A673 (cell line): ENCODE measurements at regions of chr5 and their contacts with region 1.

Region 1: GRCh38 chr5:178291161-178291561 is 58.6 kb upstream of the PHYKPL start:
- DNase-seq: no peak
- H3K4me3 ChIP-seq: no peak overlapping the region
- H3K27ac ChIP-seq: no peak overlapping the region
- H3K4me1 ChIP-seq: no peaks in the 10 kb centered on the region
- H3K27me3 ChIP-seq: no peaks in the 10 kb centered on the region
- CTCF ChIP-seq: no peak

Region 2: DNA sequence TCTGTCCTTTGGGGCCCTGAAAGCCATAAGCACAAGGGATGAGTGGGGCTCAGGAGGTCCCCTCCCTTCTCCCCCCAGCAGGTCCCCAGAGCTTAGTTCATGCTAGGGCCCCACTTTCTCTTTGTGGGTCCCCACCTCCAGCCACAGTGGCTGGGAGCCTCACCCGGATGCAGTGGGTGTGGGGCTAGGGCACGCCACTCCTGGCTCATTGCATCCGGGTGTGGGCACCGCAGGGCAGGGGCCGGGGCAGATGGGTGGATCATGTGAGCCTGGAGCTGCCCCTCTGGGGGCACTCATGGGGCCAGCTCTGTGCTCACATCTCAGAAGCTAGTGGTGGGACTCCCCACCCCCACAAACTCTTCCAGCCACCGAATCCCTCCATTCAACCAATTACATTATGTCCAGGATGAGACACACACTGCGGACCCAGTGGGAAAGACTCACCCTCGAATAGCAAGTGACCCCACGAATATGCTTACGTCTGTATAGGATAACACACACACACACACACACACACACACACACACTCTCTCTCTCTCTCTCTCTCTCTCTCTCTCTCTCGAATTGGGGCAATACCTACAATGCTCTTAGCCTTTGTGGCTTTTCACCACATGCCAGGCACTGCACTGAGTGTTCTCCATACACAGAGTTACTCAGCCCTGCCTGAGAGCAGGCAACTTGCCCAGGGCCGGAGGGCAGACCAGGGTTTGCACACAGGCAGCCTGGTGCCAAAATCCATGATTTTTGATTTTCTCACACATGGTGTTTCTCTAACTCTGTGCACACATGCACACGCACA is 41.8 kb before region 1 on chr5:
- CTCF ChIA-PET with region 1: no interaction called
- POLR2A ChIA-PET with region 1: interaction called, 12 read pairs
- intact Hi-C with region 1: no loop called
- DNase-seq: no peak
- H3K4me3 ChIP-seq: no peak overlapping the region
- H3K27ac ChIP-seq: no peak overlapping the region
- H3K4me1 ChIP-seq: no peaks in the 10 kb centered on the region
- H3K27me3 ChIP-seq: no peaks in the 10 kb centered on the region
- CTCF ChIP-seq: no peak

Region 3: DNA sequence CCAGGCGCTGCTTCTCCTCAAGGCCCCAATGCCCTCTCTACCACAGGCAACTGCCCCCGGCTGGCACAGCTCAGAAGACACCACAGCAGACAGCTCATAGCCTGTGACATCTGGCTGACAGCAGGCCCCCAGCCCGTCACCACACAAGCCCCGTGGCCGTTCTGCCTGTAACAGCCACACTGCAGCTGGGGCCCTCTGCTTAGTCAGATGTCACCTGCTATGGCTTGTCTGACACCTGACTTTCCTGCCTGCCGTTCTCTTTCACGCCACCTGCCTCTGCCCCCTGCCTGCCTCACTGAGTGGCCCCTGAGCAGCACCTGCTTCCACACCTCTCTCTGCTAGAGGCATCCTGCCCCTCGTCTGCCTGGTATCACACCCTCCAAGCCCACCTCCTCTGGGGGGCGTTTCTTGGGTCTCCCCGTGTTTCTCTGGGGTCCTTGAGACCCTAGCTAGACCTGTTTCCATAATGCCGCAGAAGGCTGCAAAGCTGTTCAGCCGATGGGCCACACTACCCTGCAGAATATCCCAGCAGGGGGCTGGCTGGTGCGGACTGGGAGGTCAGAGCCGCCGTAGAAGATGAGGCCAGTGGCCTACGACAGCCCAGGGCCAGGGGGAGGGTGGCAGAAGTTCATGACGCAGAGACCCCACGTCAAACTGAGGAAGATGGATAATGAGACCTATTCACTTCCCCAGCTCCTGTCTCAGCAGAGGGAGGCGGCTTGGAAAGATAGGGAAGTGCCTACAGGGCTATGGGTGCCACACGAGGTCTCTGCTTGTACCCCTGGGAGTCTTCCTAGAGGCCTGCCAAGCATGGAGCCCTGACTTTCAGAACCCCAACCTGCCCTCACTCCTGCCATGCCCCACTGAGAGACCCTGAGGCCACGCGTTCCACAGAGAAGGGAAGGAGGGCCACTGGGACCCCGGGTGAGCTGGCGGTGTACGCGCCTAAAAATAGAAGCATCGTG is 864.1 kb after region 1 on chr5:
- CTCF ChIA-PET with region 1: no interaction called
- POLR2A ChIA-PET with region 1: no interaction called
- intact Hi-C with region 1: no loop called
- DNase-seq: no peak
- H3K4me3 ChIP-seq: no peak overlapping the region
- H3K27ac ChIP-seq: no peak overlapping the region
- H3K4me1 ChIP-seq: no peaks in the 10 kb centered on the region
- H3K27me3 ChIP-seq: no peaks in the 10 kb centered on the region
- CTCF ChIP-seq: no peak